ENCODE measurements at regions of chr18 and their contacts with region 1.

Region 1: GRCh38 chr18:21600526-21601410 is at the start of gene ESCO1:
- DNase-seq: peak; percentile 96
- ATAC-seq: peak; percentile 88
- H3K4me3 ChIP-seq: peak within 1 kb of the TSS; percentile 87 to 95 (median 95)
- H3K27ac ChIP-seq: peak within 1 kb of the TSS; percentile 100
- H3K4me1 ChIP-seq: peaks cover 43% of the 10 kb centered on the region
- H3K27me3 ChIP-seq: no peaks in the 10 kb centered on the region; a peak in 1 of 5 replicates
- CTCF ChIP-seq: peak; percentile 97
- EP300 ChIP-seq: peak; percentile 4 to 50; a peak in 2 of 4 replicates
- POLR2A ChIP-seq: peak; percentile 88 to 95
- RAD21 ChIP-seq: peak; percentile 79
- total RNA-seq, gene ESCO1: 19.4 and 32.7 TPM in 2 replicates

Region 2: GRCh38 chr18:21383031-21383430 is 217.7 kb before region 1 on chr18:
- CTCF ChIA-PET with region 1: no interaction called
- POLR2A ChIA-PET with region 1: no interaction called
- in situ Hi-C with region 1: no loop called
- intact Hi-C with region 1: no loop called
- DNase-seq: no peak
- ATAC-seq: no peak
- H3K4me3 ChIP-seq: no peak overlapping the region
- H3K27ac ChIP-seq: no peak overlapping the region
- H3K4me1 ChIP-seq: no peaks in the 10 kb centered on the region
- H3K27me3 ChIP-seq: no peaks in the 10 kb centered on the region
- CTCF ChIP-seq: no peak
- EP300 ChIP-seq: no peak
- POLR2A ChIP-seq: no peak
- RAD21 ChIP-seq: no peak

Region 3: DNA sequence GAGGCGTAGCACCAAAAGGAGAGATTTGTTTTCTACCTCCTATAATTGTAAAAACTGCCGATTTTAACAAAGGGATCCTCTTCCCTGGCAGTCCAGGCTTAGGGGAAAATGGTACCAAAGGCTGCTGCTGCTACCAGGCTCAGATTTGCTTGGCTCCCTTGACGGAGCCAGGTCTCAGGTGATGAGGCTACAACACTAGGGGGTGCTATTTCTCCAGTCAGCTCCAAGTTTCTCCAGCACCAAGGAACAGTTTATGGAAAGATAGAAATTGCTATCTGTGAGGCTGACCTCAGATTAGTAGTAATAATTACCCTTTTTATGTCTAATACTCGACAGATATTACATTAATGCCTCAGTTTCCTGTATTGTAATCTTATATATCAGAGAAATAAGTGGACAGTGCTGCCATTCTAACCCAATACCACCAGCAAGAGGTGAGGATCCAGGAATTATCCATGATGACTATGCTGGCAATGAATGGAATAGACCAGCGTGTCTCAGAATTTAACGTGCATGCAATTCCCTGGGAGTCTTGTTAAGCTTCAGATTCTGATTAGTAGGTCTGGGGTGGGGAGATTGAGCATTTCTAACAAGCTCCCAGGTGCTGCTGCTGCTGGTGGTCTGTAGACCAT is 111.5 kb before region 1 on chr18:
- CTCF ChIA-PET with region 1: no interaction called
- POLR2A ChIA-PET with region 1: interaction called, 6 read pairs
- in situ Hi-C with region 1: no loop called
- intact Hi-C with region 1: loop called (anchors 1 kb)
- DNase-seq: peak; percentile 63
- ATAC-seq: peak; percentile 95
- H3K4me3 ChIP-seq: no peak overlapping the region
- H3K27ac ChIP-seq: no peak overlapping the region
- H3K4me1 ChIP-seq: peaks cover 16% of the 10 kb centered on the region
- H3K27me3 ChIP-seq: no peaks in the 10 kb centered on the region; a peak in 1 of 5 replicates
- CTCF ChIP-seq: peak; percentile 86
- EP300 ChIP-seq: no peak
- POLR2A ChIP-seq: no peak
- RAD21 ChIP-seq: peak; percentile 60

Region 4: DNA sequence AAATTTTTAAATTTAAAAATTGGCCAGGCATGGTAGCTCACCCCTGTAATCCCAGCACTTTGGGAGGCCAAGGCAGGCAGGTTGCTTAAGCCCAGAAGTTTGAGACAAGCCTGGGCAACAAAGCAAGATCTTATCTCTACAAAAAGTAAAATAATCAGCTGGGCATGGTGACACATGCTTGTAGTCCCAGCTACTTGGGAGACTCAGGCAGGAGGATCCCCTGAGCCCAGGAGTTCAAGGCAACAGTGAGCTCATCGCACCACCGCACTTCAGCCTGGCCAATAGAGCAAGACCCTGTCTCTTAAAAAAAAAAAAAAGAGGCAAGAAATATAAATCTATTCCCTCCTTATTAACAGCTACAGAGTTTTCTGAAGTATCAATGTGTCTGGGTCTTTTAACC is 52.1 kb before region 1 on chr18:
- CTCF ChIA-PET with region 1: no interaction called
- POLR2A ChIA-PET with region 1: interaction called, 14 read pairs
- in situ Hi-C with region 1: no loop called
- intact Hi-C with region 1: no loop called
- DNase-seq: no peak
- ATAC-seq: no peak
- H3K4me3 ChIP-seq: no peak overlapping the region
- H3K27ac ChIP-seq: peak overlapping the region; percentile 80
- H3K4me1 ChIP-seq: peaks cover 63% of the 10 kb centered on the region
- H3K27me3 ChIP-seq: no peaks in the 10 kb centered on the region
- CTCF ChIP-seq: no peak
- EP300 ChIP-seq: no peak
- POLR2A ChIP-seq: no peak
- RAD21 ChIP-seq: no peak

Region 5: DNA sequence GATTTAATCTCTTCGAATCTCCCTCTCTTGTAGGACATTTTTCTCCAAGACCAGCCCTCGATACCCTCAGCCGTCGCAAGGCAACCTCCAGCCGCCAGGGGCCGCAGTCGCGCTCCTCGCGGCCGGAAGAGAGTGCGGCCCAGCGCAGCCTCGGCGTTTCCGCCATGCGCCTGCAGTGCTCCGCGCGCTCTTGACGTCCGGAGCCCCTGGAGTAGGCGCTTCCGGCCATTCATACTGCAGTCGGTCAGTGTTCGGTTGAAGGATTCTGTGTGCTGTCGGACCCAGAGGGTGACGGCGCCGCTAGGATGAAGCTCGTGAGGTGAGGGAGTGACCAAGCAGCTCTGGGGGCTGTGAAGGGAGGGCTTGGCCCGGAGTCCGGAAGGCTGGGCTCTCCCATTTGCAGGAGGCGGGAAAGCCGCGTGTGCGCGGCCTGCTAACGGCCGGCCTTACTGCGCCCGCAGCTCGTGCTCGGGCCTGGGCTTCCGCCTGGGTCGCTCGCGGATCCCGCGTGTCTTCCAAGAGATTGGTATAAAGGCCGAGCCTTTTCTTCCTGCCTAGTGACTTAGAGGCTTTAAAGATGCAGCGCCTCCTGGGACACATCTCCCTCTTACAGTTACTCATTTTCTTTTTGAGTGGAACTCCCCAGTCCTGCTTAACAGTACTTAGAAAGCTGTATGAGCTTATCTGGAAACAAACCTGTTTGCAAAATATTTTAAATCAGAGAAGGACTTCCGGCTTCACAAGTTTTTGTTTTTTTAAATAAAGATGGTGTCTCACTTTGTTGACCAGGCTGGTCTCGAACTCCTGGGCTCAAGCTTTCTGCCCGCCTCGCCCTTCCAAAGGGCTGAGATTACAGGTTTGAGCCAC is 11.6 kb after region 1 on chr18 and contains the start of gene SNRPD1:
- CTCF ChIA-PET with region 1: interaction called, 12 read pairs
- POLR2A ChIA-PET with region 1: interaction called, 57 read pairs
- in situ Hi-C with region 1: no loop called
- intact Hi-C with region 1: no loop called
- DNase-seq: peak; percentile 86
- ATAC-seq: peak; percentile 99
- H3K4me3 ChIP-seq: peak within 1 kb of the TSS; percentile 67 to 84 (median 81)
- H3K27ac ChIP-seq: peak within 1 kb of the TSS; percentile 93
- H3K4me1 ChIP-seq: peaks cover 31% of the 10 kb centered on the region
- H3K27me3 ChIP-seq: no peaks in the 10 kb centered on the region; a peak in 1 of 5 replicates
- CTCF ChIP-seq: peak; percentile 99
- EP300 ChIP-seq: 0 out of 4 replicates have a peak, but pooled peaks of 1 of the 2 experiments have one; percentile 53
- POLR2A ChIP-seq: peak; percentile 89 to 90
- RAD21 ChIP-seq: peak; percentile 64
- total RNA-seq, gene SNRPD1: 275 and 478 TPM in 2 replicates

Region 6: DNA sequence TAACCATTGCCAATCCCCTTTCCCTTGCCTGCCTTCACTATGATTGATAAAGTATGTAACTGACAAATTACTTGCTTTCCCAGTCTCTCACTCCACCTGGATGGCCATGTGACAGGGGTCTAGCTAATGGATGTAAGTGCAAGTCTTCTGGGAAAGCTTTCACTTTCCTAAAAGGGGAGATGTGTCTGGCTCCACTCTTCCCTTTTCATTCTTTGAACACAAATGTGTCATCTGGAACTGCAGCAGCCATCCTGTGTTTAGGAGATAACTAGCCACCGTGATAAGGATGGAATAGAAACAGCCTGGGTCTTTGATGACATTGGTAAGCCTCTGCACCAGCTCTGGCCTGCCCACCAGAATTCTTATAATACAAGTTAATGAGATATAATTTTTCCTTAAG is 49.5 kb after region 1 on chr18:
- CTCF ChIA-PET with region 1: no interaction called
- POLR2A ChIA-PET with region 1: no interaction called
- in situ Hi-C with region 1: no loop called
- intact Hi-C with region 1: no loop called
- DNase-seq: no peak
- ATAC-seq: no peak
- H3K4me3 ChIP-seq: no peak overlapping the region
- H3K27ac ChIP-seq: no peak overlapping the region
- H3K4me1 ChIP-seq: no peaks in the 10 kb centered on the region
- H3K27me3 ChIP-seq: no peaks in the 10 kb centered on the region
- CTCF ChIP-seq: no peak
- EP300 ChIP-seq: no peak
- POLR2A ChIP-seq: no peak
- RAD21 ChIP-seq: no peak

Region 7: DNA sequence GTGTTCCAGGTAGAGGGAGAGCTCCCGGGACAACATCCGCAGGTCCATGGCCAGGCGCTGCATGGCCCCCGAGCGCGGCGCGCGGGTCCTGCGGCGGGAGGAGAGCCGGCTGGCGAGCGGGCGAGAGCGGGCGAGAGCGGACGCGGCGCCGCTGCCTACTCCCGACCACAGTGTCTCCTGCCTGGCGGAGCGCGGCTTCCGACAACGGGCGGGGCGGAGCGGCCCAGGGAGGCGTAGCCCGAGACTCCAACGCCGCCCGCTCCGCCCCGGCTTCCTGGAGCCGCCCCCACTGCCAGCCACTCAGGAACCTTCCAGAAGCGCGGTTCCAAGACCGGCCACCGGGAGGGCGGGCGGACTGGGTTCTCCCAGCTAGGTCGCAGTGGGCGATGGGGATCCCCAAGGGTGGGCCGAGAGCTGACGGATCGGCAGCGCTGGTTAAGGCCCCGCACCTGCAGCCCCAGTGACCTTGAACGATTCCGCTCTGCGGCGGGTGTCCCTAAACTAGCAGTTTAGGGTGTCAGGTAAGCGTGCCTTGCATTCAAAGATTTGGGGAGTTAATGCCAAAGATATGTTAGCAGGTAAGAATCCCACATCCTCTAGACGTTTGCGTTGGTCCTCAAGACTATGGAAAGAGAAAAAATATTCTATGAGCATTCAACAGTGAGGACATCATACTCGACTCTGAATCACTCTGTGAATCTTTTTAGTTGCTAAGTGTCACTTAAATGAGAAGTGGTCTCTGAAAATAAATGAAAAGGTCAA is 104.0 kb after region 1 on chr18 and contains the start of gene ABHD3:
- CTCF ChIA-PET with region 1: no interaction called
- POLR2A ChIA-PET with region 1: interaction called, 14 read pairs
- in situ Hi-C with region 1: no loop called
- intact Hi-C with region 1: no loop called
- DNase-seq: peak; percentile 78
- ATAC-seq: peak; percentile 98
- H3K4me3 ChIP-seq: peak within 1 kb of the TSS; percentile 76 to 90 (median 85)
- H3K27ac ChIP-seq: peak within 1 kb of the TSS; percentile 89
- H3K4me1 ChIP-seq: peaks cover 44% of the 10 kb centered on the region
- H3K27me3 ChIP-seq: no peaks in the 10 kb centered on the region
- CTCF ChIP-seq: peak; percentile 37; the same call in 1 of the 2 replicates
- EP300 ChIP-seq: peak in 1 of 2 experiments; percentile 28; a peak in 1 of 4 replicates
- POLR2A ChIP-seq: peak; percentile 84 to 94
- RAD21 ChIP-seq: peak; percentile 42
- total RNA-seq, gene ABHD3: 14.2 and 32.1 TPM in 2 replicates

Measured in HepG2 (cell line).